Gastrocnemius medialis (tissue), 4 donors: ENCODE measurements at regions of chr16 and their contacts with region 1.

Region 1: DNA sequence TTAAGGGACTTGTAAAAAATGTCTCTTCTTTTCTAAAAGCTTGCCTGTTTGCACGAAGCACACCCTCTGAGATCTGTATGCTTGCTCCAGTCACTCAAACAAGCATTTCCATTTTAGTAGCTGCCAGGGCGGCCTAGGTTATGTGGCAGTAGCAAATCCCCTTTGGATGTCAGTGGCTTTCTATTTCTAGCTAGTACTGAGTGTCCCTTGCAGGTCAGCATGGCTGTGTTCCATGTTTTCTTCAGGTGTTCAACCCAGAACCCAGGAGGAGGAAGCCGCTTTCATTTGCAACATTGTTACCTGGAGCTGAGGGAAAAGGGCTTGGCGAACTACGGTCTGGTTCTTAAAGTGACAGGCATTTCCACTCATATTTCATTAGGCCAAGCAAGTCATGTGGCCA is 36.4 kb downstream of the FOXL1 start:
- DNase-seq: peak; percentile 77 to 85
- ATAC-seq: peak; percentile 95
- H3K4me3 ChIP-seq: no peak overlapping the region
- H3K27ac ChIP-seq: peak overlapping the region; percentile 72 to 87 (median 76)
- H3K4me1 ChIP-seq: peaks cover 27 to 35% of the 10 kb centered on the region in 2 donors
- H3K27me3 ChIP-seq: no peaks in the 10 kb centered on the region
- CTCF ChIP-seq: no peak
- POLR2A ChIP-seq: peak in 1 of 2 donors; percentile 45

Region 2: DNA sequence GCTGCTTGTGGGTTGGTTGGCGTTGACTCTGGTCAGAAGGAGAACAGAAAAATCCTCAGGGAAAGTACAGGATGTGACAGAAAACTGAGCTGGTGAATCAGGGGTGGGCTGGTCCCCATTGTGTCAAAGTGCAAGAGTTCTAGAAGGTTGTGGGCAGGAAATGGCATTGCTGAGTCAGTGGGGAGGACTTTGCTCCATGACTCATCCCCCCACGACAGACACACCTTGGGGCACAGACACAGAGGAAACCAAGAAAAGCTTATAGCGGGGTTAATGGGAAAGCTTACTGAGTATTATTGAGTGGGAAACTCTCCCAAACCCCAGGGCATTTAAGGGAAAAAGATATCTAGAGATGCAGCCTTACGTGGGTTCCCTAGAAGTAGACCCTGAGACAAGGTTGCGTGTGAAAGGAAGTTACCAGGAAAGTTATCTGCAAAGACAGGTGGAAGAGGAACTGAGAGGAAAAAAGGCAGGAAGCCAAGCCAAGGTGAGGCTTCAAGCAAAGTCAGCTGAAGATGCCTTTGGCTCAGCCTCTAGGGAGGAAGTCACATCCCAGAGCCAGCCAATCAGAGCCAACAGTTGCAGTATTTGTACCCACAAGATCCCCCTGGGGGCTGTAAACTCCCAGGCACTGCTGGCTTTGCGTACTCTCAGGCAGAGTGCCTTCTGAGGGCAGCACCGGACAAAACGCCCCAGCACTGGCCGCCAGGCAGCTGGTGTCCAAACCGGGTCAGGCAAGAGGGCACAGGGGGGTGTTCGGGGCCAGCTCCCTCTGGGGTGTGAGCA is 50.0 kb after region 1 on chr16:
- in situ Hi-C with region 1: no loop called
- intact Hi-C with region 1: loop called (anchors 2 kb)
- DNase-seq: peak; percentile 56 to 73
- ATAC-seq: peak; percentile 34 to 37
- H3K4me3 ChIP-seq: peak overlapping the region in 2 of 4 donors; percentile 29 to 37
- H3K27ac ChIP-seq: peak overlapping the region; percentile 82 to 96 (median 90)
- H3K4me1 ChIP-seq: peaks cover 55 to 93% of the 10 kb centered on the region in 2 donors
- H3K27me3 ChIP-seq: no peaks in the 10 kb centered on the region
- CTCF ChIP-seq: no peak
- POLR2A ChIP-seq: peak in 1 of 2 donors; percentile 26

Region 3: DNA sequence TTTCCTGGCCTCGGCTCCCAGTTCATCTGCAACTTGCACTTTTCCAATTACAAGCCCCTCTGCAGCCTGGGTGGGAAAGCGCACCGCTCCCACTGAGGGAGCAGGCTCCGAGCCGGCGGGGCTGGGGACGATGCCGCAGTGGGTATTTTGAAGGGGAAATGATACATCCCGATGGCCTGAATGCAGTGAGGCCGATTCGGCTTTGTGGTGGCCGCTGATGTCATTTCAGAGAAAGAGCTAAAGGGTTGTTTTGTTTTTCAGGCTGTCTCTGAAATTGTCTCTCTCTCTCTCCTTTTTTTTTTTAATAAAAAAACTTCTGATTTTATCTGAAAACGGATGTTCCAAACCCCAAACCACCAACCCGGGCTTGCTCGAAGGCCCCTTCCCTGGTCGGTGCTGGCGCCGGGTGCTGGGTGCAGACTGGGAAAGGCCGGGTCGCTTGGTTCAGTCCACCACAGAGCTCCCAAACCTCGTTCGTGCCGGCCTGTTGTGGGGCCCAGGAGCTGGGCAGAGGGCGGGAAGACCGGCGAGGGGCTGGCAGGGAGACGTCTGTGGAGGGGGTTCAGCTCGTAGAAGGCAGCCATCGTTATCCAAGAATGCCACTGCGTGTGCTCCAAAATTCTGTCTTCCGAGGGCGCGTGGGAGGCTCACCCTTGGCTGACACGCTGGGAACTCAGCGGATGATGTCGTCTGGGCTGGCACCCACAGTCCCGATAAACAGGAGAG is 66.5 kb after region 1 on chr16:
- in situ Hi-C with region 1: no loop called
- intact Hi-C with region 1: no loop called
- DNase-seq: no peak
- ATAC-seq: peak in 1 of 2 donors; percentile 36
- H3K4me3 ChIP-seq: peak overlapping the region in 1 of 4 donors; percentile 21
- H3K27ac ChIP-seq: peak overlapping the region in 3 of 4 donors; percentile 51 to 55 (median 55)
- H3K4me1 ChIP-seq: no peaks in the 10 kb centered on the region
- H3K27me3 ChIP-seq: peaks cover 5 to 18% (median 17%) of the 10 kb centered on the region in 3 donors
- CTCF ChIP-seq: no peak
- POLR2A ChIP-seq: no peak

Region 4: GRCh38 chr16:86751076-86752030 is 136.7 kb after region 1 on chr16:
- in situ Hi-C with region 1: no loop called
- intact Hi-C with region 1: no loop called
- DNase-seq: no peak
- ATAC-seq: peak; percentile 53 to 85
- H3K4me3 ChIP-seq: no peak overlapping the region
- H3K27ac ChIP-seq: peak overlapping the region in 2 of 4 donors; percentile 13 to 39
- H3K4me1 ChIP-seq: peaks cover 4 to 7% of the 10 kb centered on the region in 2 donors
- H3K27me3 ChIP-seq: no peaks in the 10 kb centered on the region
- CTCF ChIP-seq: no peak
- POLR2A ChIP-seq: no peak